Activated CD4-positive, alpha-beta T cell treated with anti-CD3 and anti-CD28 coated beads for 36 hours (primary cell): ENCODE measurements at regions of chr15 and their contacts with region 1.

Region 1: DNA sequence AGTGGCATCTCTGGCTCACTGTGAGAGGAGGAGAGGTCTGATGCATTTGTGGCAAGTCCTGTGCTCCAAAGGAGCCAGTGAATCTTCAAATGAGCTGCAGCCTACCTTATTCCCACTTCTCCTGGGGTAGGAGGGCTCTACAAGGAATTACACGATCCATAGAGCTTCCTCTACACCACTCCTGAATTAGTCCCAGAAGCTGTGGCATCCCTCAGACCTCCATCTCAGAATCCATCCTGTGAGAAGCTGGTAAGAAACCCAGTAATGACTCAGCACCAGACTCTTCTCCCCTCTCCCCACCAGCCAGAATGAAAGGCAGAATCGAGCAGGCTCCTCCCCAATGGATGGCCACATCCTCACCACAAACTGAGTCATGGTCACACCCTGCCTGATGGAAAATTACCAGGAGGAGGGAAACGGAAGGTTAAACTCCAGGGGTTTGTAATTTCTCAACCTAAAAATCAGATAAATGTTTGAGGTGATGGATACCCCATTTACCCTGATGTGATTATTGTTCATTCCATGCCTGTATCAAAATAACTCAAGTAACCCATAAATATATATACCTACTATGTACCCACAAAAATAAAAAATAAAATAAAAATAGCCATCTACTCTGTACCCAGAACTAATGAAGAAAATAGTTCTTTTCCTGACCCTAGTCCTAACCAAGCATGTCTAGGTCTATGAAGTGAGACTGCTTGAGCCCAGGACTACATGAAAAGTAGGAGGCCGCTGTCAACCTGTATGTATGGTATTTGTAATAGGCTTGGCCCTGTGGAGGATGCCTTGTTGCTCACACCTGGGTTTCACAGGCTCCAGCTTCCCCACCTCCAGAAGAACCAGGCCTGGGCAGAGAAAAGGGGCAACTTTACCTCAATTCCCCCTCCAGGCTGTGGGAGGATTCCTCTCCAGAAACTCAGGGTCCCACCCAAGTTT is 6.6 kb upstream of the PKM start:
- DNase-seq: peak; percentile 88
- ATAC-seq: peak; percentile 97
- H3K4me3 Mint-ChIP-seq: peak overlapping the region; percentile 72
- H3K27ac Mint-ChIP-seq: peak overlapping the region; percentile 94
- H3K4me1 Mint-ChIP-seq: peaks cover 41% of the 10 kb centered on the region
- H3K27me3 Mint-ChIP-seq: no peaks in the 10 kb centered on the region

Region 2: DNA sequence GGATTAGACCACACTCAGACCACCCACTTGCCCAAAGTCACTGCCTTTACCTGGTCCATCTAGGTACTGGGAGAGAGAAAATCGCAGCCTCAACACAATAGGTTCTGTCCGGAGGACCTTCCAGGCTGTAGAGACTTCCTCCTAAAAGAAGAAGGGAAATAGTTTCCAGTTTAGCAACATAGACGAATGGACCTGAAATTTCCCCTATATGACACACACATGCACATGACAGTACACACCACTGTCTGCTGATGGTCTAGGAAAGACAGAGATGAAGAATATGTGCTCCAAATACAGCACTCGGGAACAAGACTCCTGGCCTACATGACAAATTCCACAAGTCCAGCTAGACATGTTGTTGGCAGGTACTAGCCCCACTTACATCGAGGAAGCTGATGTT is 27.5 kb after region 1 on chr15:
- CTCF ChIA-PET with region 1: interaction called, 5 read pairs
- POLR2A ChIA-PET with region 1: no interaction called
- intact Hi-C with region 1: loop called in 1 of 2 experiments (anchors 1 kb)
- DNase-seq: no peak
- ATAC-seq: no peak
- H3K4me3 Mint-ChIP-seq: no peak overlapping the region
- H3K27ac Mint-ChIP-seq: no peak overlapping the region
- H3K4me1 Mint-ChIP-seq: peaks cover 45% of the 10 kb centered on the region
- H3K27me3 Mint-ChIP-seq: no peaks in the 10 kb centered on the region